Activated CD8-positive, alpha-beta T cell treated with anti-CD3 and anti-CD28 coated beads, Interleukin-2, amount 10 ng/mL, durations not matched to agents 7 days and 5 days (primary cell): ENCODE measurements at regions of chr17 and their contacts with region 1.

Region 1: DNA sequence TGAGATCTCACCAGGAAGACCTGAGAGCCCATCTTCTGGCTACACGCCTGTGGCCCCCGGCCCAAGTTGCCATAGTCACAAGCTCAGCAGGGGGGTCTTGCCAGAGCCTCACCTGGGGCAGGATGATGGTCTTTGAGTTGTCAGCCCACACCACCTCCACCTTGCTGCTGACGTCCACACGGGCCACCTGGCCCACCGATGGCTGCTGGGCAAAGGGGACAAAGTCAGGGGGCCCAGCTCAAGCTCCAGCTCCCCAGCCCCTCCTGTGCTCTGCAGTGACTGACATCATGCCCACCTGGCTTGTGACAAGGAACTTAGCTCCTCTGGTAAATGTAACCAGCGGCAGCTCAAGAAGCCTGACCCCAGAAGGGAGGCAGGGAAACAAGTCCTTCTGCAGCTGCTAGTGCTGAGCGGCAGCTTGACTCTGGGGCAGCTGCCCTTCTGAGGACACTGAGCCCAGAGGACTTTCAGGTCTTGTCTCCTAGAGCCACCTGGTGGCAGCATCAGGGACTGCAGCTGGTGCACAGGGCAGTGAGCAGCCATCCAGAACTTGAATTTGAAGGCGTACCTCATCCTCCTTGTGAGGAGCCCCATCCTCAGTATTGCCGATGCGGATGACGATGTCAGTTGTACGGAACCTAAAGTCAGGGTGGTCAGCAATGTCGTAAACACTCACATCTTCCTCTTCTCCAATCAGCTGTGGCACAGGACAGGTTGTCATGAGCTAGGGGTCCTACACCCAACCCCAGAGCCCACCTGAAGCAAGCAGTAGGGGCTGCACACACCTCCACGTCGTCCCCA is 13.5 kb downstream of the SPHK1 start:
- DNase-seq: peak; percentile 89
- ATAC-seq: peak; percentile 89
- H3K4me3 Mint-ChIP-seq: no peak overlapping the region
- H3K27ac Mint-ChIP-seq: peak overlapping the region; percentile 47
- H3K4me1 Mint-ChIP-seq: no peaks in the 10 kb centered on the region
- H3K27me3 Mint-ChIP-seq: no peaks in the 10 kb centered on the region

Region 2: GRCh38 chr17:76141212-76142038 is 256.5 kb before region 1 on chr17 and contains the start of gene FOXJ1:
- CTCF ChIA-PET with region 1: no interaction called
- POLR2A ChIA-PET with region 1: no interaction called
- DNase-seq: peak; percentile 94
- ATAC-seq: peak; percentile 55
- H3K4me3 Mint-ChIP-seq: peak within 1 kb of the TSS; percentile 76
- H3K27ac Mint-ChIP-seq: peak within 1 kb of the TSS; percentile 97
- H3K4me1 Mint-ChIP-seq: peaks cover 72% of the 10 kb centered on the region
- H3K27me3 Mint-ChIP-seq: no peaks in the 10 kb centered on the region
- total RNA-seq, gene FOXJ1: 8.7 to 9.1 TPM

Region 3: DNA sequence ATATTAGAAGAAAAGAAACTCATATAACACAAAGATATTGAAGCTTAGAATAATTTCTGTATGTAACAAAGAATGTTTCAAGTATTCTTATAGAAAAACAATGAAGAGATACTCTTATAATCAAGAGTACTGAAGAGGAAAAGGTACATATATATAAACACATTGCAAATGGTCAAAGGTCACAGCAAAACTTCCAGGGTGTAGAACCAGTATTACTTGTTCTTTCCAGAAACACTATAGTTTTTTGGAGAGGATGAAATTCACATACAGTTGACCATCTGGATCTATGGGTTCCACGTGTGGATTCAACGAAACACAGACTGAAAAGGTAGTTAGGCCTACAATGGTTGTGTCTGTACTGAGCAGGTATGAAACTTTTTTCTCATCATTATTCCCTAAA is 66.8 kb before region 1 on chr17:
- CTCF ChIA-PET with region 1: interaction called, 11 read pairs
- POLR2A ChIA-PET with region 1: no interaction called
- DNase-seq: no peak
- ATAC-seq: no peak
- H3K4me3 Mint-ChIP-seq: no peak overlapping the region
- H3K27ac Mint-ChIP-seq: no peak overlapping the region
- H3K4me1 Mint-ChIP-seq: no peaks in the 10 kb centered on the region
- H3K27me3 Mint-ChIP-seq: no peaks in the 10 kb centered on the region

Region 4: DNA sequence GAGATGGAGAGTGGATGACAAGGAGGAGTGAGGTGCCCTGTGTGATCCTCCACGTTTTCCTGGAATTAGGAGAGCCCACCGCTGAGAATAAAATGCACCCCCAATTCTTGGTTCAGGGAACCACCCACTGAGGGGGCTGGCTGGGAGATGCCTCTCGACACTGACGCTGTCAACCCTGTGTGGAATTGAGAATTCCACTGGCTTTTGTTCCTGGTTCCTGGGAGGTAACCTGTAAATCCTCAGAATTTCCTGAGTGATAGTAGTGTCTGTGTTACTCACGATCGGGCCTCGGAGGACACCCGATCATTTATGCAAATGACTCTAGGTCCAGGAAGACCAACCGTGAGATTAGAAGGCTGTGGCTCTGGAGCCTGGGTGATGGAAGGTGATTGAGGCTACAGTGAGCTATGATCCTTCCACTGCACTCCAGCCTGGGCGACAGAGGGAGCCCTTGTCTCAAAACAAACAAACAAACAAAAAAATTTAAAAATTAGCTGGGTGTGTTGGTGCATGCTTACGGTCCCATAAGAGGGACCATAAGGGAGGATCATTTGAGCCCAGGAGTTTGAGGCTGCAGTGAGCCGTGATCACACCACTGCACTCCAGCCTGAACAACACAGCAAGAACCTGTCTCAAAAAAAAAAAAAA is 32.5 kb before region 1 on chr17:
- CTCF ChIA-PET with region 1: interaction called, 16 read pairs
- POLR2A ChIA-PET with region 1: interaction called, 3 read pairs
- DNase-seq: no peak
- ATAC-seq: no peak
- H3K4me3 Mint-ChIP-seq: no peak overlapping the region
- H3K27ac Mint-ChIP-seq: no peak overlapping the region
- H3K4me1 Mint-ChIP-seq: no peaks in the 10 kb centered on the region
- H3K27me3 Mint-ChIP-seq: peaks cover 3% of the 10 kb centered on the region

Region 5: DNA sequence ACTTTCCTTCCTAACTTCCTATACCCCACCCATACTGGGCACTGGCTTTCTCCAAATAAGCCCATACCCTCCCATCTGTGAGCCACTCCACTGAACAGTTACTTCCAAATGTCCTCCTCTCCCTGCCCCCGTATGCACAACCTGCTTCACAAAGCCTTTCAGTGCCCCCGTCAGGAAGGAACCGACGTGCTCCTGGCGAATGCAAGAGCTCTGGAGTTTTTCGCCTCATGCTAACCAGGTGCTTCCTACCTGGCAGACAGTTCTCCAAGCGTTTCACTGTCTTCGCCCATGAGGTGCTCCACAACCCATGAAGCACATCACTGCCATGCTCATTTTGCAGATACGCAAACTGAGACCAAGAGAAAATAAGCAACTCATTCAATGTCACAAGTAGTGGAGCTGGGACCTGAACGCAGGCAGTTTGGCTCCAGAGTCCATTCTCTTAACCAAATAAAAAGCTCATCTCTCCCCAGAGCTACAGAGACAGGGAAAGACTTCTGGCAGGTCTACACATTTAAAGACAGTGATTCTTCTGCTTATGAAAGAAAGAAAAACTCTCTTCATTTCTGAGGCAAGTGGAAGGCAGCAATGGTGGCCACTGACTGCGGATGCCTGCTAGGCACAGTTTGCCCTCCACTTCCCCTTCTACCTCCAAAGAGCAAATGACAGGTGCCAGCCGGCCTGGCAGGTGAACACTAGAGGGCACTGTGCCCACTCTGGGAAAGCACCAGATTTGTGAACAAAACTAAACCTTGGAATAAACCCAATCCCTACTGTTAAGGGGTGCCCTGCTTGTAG is 10.4 kb after region 1 on chr17:
- CTCF ChIA-PET with region 1: interaction called, 34 read pairs
- POLR2A ChIA-PET with region 1: no interaction called
- DNase-seq: peak; percentile 81
- ATAC-seq: peak; percentile 84
- H3K4me3 Mint-ChIP-seq: no peak overlapping the region
- H3K27ac Mint-ChIP-seq: peak overlapping the region; percentile 39
- H3K4me1 Mint-ChIP-seq: peaks cover 13% of the 10 kb centered on the region
- H3K27me3 Mint-ChIP-seq: no peaks in the 10 kb centered on the region

Region 6: GRCh38 chr17:76437467-76438402 is 39.8 kb after region 1 on chr17:
- CTCF ChIA-PET with region 1: interaction called, 11 read pairs
- POLR2A ChIA-PET with region 1: no interaction called
- DNase-seq: no peak
- ATAC-seq: no peak
- H3K4me3 Mint-ChIP-seq: no peak overlapping the region
- H3K27ac Mint-ChIP-seq: no peak overlapping the region
- H3K4me1 Mint-ChIP-seq: peaks cover 21% of the 10 kb centered on the region
- H3K27me3 Mint-ChIP-seq: no peaks in the 10 kb centered on the region

Region 7: DNA sequence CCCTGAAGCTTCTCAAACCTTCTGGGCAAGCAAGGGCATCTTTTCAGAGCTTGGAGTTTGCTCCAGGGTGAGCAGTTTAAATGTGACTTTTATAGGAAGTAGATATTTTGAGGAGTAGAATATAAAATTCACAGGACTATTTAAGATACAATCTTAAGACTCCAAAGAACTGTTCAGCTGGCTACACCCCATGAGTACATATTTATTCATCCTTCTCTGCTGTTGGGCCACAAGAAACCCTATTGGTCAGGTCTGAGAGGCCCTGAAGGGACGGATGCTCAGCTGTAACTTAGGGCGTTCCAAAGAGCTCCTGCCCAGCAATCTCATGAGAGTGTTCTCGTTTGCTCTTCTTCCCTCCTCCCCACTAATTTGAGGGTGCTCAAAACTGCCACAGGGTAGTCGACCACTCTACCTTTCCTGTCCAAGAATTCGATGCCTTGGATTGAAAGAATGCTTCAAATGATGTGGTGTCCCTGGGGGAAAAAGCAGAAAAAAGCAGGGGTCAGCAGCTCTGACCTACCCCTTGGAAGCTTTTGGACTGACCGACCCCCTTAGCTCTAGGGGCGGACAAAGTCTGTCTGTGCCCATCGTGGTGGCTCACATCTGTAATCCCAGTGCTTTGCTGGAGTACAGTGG is 180.6 kb after region 1 on chr17:
- CTCF ChIA-PET with region 1: no interaction called
- POLR2A ChIA-PET with region 1: no interaction called
- DNase-seq: no peak
- ATAC-seq: no peak
- H3K4me3 Mint-ChIP-seq: no peak overlapping the region
- H3K27ac Mint-ChIP-seq: no peak overlapping the region
- H3K4me1 Mint-ChIP-seq: peaks cover 6% of the 10 kb centered on the region
- H3K27me3 Mint-ChIP-seq: peaks cover 7% of the 10 kb centered on the region